ENCODE measurements at regions of chr6 and their contacts with region 1.

Region 1: DNA sequence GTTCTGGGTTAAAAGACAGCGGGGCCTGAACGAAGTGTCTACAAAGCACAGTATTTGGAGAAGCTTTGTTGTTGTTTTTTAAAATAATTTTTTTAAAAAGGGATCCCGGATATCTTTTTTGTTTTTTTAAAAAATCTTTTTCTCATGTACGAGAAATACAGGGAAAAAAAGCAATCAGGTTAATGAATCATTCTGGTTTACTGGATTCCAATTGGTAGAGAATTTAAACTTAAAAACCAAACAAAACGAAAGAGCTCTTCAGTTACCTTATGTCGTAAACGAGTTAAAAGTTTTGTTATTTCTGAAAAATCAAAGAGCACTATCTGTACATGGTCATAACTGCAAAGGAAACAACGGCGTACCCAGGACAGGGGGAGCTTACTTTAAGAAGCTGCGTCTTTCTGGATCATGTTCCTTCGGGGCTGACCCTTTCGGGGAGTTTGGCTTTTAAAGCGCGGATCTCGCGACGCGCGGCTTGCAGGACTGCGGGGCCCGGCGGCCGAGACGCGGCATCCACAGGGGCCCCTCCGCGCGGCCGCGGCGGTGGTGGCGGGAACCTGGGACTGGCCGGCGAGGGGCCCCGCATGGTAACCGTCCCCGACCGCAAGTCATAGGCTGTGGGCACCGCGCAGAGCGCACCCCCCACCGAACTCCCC is 927 bp downstream of the IL20RA start:
- DNase-seq: peak; percentile 4
- ATAC-seq: peak; percentile 57
- H3K4me3 ChIP-seq: peak overlapping the region; percentile 53 to 58
- H3K27ac ChIP-seq: no peak overlapping the region
- H3K4me1 ChIP-seq: no peaks in the 10 kb centered on the region
- H3K27me3 ChIP-seq: peaks cover 41% of the 10 kb centered on the region
- CTCF ChIP-seq: no peak

Region 2: GRCh38 chr6:136014454-136015421 is 1029.1 kb before region 1 on chr6:
- CTCF ChIA-PET with region 1: no interaction called
- POLR2A ChIA-PET with region 1: no interaction called
- in situ Hi-C with region 1: no loop called
- intact Hi-C with region 1: no loop called
- DNase-seq: no peak
- ATAC-seq: no peak
- H3K4me3 ChIP-seq: no peak overlapping the region
- H3K27ac ChIP-seq: no peak overlapping the region
- H3K4me1 ChIP-seq: no peaks in the 10 kb centered on the region
- H3K27me3 ChIP-seq: no peaks in the 10 kb centered on the region
- CTCF ChIP-seq: no peak

Region 3: DNA sequence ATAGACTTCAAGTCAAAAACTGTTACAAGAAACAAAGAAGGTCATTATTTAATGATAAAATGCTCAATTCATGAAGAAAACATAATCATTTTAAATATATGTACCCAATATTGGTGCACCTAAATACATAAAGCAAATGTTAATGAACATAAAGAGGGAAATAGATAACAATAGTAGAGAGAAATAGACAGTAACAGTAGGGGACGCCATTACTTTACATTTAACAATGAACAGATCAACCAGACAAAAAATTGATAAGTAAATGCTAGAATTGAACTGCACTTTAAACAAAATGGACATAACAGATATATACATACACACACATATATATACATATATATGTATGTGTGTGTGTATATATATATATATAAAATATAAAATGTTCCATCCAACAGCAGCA is 92.2 kb after region 1 on chr6:
- CTCF ChIA-PET with region 1: no interaction called
- POLR2A ChIA-PET with region 1: no interaction called
- in situ Hi-C with region 1: no loop called
- intact Hi-C with region 1: no loop called
- DNase-seq: no peak
- ATAC-seq: no peak
- H3K4me3 ChIP-seq: no peak overlapping the region
- H3K27ac ChIP-seq: no peak overlapping the region
- H3K4me1 ChIP-seq: no peaks in the 10 kb centered on the region
- H3K27me3 ChIP-seq: no peaks in the 10 kb centered on the region
- CTCF ChIP-seq: no peak

Region 4: DNA sequence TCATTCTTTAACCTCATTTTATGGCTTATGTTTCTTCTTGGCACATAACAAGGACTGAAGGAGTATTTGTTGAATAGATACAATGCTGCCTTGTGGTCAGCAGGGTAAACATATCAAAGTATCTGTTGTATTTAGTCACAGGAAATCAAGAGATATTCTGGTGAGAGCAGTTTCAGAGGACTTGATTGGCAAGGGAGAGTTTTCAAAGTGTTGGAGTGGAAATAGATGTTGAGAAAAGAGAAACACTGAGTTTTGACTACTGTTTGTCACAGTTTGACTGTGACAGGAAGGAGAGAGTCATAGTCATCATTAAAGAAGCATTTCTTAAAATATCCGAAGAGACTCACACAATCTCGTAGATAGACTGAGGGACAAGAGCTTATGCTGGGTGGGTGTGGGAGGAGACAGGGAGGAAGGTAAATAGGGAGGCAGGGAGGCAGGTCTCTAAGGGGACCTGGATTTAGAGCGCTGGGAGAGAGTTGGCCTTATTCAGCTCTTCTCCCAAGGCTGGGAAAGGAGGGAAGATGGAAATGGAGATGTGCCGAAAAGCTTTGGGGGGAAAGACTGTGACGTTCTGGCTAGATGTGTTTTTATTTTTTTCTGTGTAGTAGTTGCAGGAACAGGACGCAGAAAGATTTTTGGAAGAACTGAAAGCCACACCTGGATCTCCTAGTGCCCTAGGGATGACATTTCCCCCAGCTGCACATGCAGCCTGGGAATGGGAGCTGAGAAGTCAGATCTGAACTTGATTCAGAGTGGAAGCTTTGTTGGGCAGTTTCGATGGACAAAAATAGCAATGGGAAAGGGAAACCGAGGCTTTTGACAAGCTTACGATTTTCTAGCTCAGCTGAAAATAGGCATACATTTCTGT is 240.3 kb after region 1 on chr6:
- CTCF ChIA-PET with region 1: no interaction called
- POLR2A ChIA-PET with region 1: interaction called, 11 read pairs
- in situ Hi-C with region 1: no loop called
- intact Hi-C with region 1: no loop called
- DNase-seq: no peak
- ATAC-seq: no peak
- H3K4me3 ChIP-seq: no peak overlapping the region
- H3K27ac ChIP-seq: no peak overlapping the region
- H3K4me1 ChIP-seq: no peaks in the 10 kb centered on the region
- H3K27me3 ChIP-seq: no peaks in the 10 kb centered on the region
- CTCF ChIP-seq: no peak

Measured in Panc1 (cell line).